ENCODE measurements at regions of chr13 and their contacts with region 1.

Region 1: GRCh38 chr13:47774671-47774994 is 226.4 kb downstream of the SUCLA2 start:
- DNase-seq: no peak
- ATAC-seq: no peak

Region 2: DNA sequence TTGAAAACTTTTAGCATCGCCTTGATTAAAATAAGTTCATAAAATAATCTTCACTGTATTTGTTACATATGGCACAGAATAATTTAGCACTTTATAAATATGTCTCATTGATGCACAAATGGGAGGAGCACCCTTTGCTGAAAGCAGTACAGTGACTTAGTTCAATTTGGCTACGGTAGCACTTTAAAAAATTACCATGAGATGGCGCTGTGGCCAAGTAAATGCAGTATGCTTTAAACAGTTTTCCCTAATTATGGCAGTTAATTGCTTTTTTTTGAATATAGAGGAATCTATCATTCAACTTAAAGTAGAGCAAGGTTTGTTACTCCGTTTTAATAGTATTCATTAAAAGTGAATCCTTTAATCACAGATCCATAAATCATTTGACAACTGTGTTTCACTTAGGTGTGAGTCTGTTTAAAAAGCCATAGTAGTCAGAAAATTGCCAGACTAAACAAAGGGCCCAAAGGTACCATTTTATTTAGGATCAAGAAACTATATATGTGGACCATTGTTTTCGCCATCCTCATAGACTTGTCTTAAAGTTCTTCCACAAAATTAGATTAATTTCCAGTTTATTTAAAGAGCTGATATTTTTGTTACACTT is 942.9 kb before region 1 on chr13:
- intact Hi-C with region 1: loop called (anchors 5 kb)
- DNase-seq: no peak
- ATAC-seq: no peak

Region 3: DNA sequence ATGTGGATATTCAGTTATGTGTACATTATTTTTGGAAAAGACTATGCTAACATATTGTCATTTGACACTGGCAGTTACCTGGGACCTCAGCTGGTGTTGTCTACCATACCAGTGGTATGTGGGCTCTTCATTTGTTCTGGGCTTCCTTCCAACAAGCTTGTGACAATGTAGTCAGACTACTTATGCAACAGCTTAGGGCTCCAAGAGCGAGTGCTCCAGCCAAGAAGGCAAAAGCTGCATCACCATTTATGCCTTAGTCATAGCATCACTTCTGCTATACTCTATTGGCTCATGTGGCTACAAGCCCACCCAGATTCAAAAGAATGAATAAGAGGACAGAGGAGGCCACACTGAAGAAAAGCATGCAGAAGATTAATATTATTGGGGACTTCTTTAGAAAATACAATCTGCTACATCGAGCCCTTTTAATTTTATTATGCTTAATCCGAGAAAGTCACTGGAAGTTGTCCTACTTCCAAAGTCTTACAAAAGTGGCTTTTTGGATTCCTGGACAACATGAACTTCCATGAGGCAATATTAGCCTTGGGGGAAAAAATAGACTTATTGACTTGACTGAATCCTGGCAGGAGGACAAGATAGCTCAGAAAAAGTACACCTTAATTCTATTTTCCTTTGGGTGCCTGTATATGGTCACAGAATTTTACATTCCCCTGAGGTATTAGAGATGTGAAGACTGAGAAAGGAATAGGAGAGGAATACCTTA is 348.3 kb before region 1 on chr13:
- intact Hi-C with region 1: loop called (anchors 10 kb)
- DNase-seq: peak; percentile 55
- ATAC-seq: peak; percentile 95

Region 4: DNA sequence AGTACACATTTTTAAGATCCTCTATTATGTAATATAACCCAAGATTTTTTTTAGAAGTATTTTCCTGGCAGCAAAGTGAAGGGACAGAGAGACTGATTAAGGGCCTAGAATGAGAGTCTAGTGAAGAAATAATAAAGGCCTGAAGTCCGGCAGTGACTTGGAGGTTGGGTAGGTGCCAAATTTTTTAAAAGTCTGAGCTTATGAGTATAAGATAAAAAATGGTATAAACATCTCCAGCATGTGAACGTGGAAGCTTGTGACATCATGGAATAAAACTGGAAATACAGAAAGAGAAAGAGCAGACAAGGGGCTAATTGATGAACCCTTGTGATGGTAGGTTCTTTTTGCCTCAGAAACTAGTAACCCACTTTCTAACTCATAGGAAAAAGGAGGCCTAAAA is 51.8 kb after region 1 on chr13:
- intact Hi-C with region 1: no loop called
- DNase-seq: no peak
- ATAC-seq: no peak

Measured in Right ventricle myocardium superior (tissue), 1 donor.